ENCODE measurements at regions of chr4 and their contacts with region 1.

Region 1: GRCh38 chr4:34766935-34767334 is 1477.4 kb downstream of the ARAP2 start:
- DNase-seq: no peak
- ATAC-seq: no peak
- H3K4me3 ChIP-seq: no peak overlapping the region
- H3K27ac ChIP-seq: no peak overlapping the region
- H3K4me1 ChIP-seq: no peaks in the 10 kb centered on the region
- H3K27me3 ChIP-seq: no peaks in the 10 kb centered on the region
- CTCF ChIP-seq: no peak; a peak in 1 of 6 replicates
- EP300 ChIP-seq: no peak
- POLR2A ChIP-seq: no peak
- RAD21 ChIP-seq: no peak

Region 2: GRCh38 chr4:34826660-34827059 is 59.7 kb after region 1 on chr4:
- CTCF ChIA-PET with region 1: no interaction called
- POLR2A ChIA-PET with region 1: no interaction called
- RAD21 ChIA-PET with region 1: no interaction called
- SMC1A ChIA-PET with region 1: no interaction called
- in situ Hi-C with region 1: no loop called
- intact Hi-C with region 1: loop called (anchors 5 kb)
- DNase-seq: no peak
- ATAC-seq: no peak
- H3K4me3 ChIP-seq: no peak overlapping the region
- H3K27ac ChIP-seq: no peak overlapping the region
- H3K4me1 ChIP-seq: no peaks in the 10 kb centered on the region
- H3K27me3 ChIP-seq: no peaks in the 10 kb centered on the region
- CTCF ChIP-seq: no peak
- EP300 ChIP-seq: no peak
- POLR2A ChIP-seq: no peak
- RAD21 ChIP-seq: no peak

Region 3: DNA sequence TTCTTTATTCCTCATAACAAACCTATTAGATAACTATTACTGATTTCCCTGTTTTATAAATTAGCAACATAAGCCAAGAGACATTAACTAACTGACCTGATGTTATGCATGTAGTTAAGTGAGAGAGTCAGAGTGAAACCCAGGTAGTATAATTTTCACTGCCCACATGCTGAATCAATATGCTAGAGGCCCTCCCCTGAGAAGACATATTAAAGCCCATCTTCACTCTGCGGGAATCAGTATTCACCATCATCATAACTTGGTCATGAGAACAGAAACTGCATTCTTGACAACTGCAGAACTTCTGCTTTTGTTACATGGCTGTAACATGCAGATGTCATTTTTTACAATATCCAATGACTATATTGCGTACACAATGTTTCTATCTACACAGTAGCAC is 153.1 kb after region 1 on chr4:
- CTCF ChIA-PET with region 1: no interaction called
- POLR2A ChIA-PET with region 1: no interaction called
- RAD21 ChIA-PET with region 1: no interaction called
- SMC1A ChIA-PET with region 1: no interaction called
- in situ Hi-C with region 1: no loop called
- intact Hi-C with region 1: loop called (anchors 10 kb)
- DNase-seq: no peak
- ATAC-seq: peak; percentile 52
- H3K4me3 ChIP-seq: no peak overlapping the region
- H3K27ac ChIP-seq: no peak overlapping the region
- H3K4me1 ChIP-seq: no peaks in the 10 kb centered on the region
- H3K27me3 ChIP-seq: no peaks in the 10 kb centered on the region
- CTCF ChIP-seq: no peak
- EP300 ChIP-seq: no peak
- POLR2A ChIP-seq: no peak
- RAD21 ChIP-seq: no peak

Region 4: GRCh38 chr4:35151816-35152572 is 385.1 kb after region 1 on chr4:
- CTCF ChIA-PET with region 1: no interaction called
- POLR2A ChIA-PET with region 1: no interaction called
- RAD21 ChIA-PET with region 1: no interaction called
- SMC1A ChIA-PET with region 1: interaction called, 4 read pairs
- in situ Hi-C with region 1: no loop called
- intact Hi-C with region 1: loop called (anchors 10 kb)
- DNase-seq: no peak
- ATAC-seq: peak; percentile 59; the same call in 2 of the 3 replicates
- H3K4me3 ChIP-seq: no peak overlapping the region
- H3K27ac ChIP-seq: no peak overlapping the region
- H3K4me1 ChIP-seq: no peaks in the 10 kb centered on the region
- H3K27me3 ChIP-seq: no peaks in the 10 kb centered on the region
- CTCF ChIP-seq: peak in 1 of 3 experiments; percentile 13; a peak in 2 of 6 replicates
- EP300 ChIP-seq: no peak
- POLR2A ChIP-seq: no peak
- RAD21 ChIP-seq: no peak

Measured in GM12878 (cell line).